AG04450 (cell line): ENCODE measurements at regions of chr10 and their contacts with region 1.

Region 1: GRCh38 chr10:101012525-101013364 is 13.1 kb downstream of the LZTS2 start:
- DNase-seq: peak; percentile 79
- H3K4me3 ChIP-seq: no peak overlapping the region
- H3K27ac ChIP-seq: peak overlapping the region; percentile 75
- H3K27me3 ChIP-seq: no peaks in the 10 kb centered on the region
- CTCF ChIP-seq: peak; percentile 79

Region 2: DNA sequence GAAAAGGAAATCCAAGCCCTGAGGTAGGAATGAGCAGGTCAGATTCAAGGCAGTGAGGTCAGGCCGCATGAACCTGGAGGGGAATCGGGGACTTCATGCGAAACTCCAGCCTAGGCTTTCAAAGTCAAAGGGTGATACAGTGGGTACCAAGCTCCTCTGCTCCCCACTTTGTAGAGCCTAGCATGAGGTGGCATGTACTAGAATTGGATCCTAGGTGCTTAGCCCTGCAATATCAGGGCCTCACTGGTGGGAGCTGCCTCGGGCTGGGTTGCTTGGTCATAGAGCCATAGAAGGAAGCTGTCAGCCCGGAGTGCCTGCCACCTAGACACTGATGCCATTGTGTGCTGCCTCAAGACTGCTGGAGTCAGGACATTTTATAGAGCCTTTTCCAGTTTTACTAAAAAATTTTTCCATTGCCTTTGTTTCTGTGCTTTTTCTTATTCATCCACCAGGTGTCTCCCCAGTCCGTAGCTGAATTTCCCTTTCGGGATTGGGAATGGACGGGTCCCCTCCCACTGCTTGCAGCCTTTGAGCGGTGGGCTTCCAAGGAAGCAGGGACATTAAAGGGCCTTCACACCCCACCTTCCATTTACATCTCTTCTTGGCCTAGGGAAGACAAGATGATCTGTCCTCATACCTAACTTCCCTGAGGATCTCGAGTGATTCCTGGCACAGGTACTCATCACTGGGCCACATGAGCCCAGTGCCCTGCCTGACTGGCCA is 18.6 kb before region 1 on chr10:
- CTCF ChIA-PET with region 1: interaction called, 271 read pairs
- POLR2A ChIA-PET with region 1: interaction called, 20 read pairs
- DNase-seq: no peak
- H3K4me3 ChIP-seq: no peak overlapping the region
- H3K27ac ChIP-seq: no peak overlapping the region
- H3K27me3 ChIP-seq: no peaks in the 10 kb centered on the region
- CTCF ChIP-seq: peak; percentile 75

Region 3: GRCh38 chr10:100998991-100999741 is 13.6 kb before region 1 on chr10:
- CTCF ChIA-PET with region 1: interaction called, 271 read pairs
- POLR2A ChIA-PET with region 1: interaction called, 20 read pairs
- DNase-seq: no peak
- H3K4me3 ChIP-seq: peak overlapping the region; percentile 90
- H3K27ac ChIP-seq: peak overlapping the region; percentile 95
- H3K27me3 ChIP-seq: no peaks in the 10 kb centered on the region
- CTCF ChIP-seq: peak; percentile 76

Region 4: DNA sequence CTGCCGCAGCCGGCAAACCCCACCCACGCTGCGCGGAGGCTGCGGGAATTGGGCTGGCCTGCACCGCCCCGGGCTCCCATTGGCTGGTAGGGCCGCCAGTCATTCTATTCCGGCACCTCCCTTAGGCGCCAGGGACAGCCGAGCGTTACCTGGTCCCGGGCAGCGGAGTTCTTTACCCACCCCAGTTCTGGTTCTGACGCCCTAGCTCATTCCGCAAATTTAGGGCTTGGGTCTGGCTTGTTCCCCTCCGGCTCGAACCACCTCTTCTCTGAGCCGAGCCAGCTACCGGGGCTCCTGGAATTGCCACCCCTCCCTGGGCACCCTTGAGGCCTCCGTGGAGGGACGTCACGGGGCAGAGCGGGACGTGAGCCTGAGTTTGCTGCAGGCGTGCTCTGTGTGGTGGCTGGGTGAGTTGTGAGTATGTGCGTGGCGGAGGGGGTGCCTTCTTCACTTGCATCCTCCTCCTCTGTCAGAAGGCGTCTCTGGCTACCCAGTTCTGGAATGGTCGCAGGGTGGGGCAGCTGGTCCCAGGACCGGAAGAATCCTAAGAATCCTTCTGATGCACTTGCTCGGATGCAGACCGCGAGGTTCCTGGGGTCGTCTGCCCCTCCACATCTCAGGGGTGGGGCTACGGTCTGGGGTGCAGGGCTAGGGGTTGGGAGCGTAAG is 18.5 kb after region 1 on chr10 and contains the starts of genes PDZD7 and SFXN3:
- CTCF ChIA-PET with region 1: interaction called, 46 read pairs
- POLR2A ChIA-PET with region 1: no interaction called
- DNase-seq: peak; percentile 83
- H3K4me3 ChIP-seq: peak within 1 kb of the TSS; percentile 96
- H3K27ac ChIP-seq: peak within 1 kb of the TSS; percentile 99
- H3K27me3 ChIP-seq: no peaks in the 10 kb centered on the region
- CTCF ChIP-seq: no peak
- polyA plus RNA-seq, gene PDZD7: 0.27 and 0.60 TPM in 2 replicates
- polyA plus RNA-seq, gene SFXN3: 77.8 and 87.0 TPM in 2 replicates

Region 5: DNA sequence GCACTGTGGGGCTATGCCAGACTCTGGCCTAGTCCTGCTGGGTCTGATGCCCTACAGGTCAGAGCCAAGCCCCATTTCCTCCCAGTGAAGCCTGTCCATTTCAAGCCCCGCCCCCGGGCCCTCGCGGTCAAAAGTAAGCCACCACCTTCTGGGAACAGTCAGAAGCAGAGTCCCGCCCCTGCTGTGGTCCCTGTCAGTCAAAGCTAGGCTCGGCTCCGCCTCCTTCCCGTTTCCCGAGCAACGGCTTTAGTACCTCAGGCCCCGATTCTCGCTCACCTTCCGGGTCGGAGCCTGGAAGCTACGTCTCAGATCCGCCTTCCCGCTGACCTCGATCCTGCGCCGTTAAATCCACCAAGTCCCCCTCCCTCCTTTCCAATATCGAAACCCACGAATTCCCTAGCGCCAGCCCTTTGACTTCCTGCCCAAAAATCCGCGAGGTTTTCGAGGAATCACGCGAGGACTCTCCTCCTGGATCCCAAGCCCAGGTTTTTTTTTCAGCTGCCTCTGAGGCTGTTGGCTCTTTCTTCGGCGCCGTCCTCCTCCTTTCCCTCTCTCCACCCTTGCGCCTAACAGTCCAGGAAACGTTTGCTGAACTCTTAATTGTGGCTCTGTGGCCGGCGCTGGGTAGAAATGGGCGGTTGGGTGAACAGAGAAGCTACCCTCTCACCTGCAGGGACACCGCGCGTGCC is 30.1 kb after region 1 on chr10:
- CTCF ChIA-PET with region 1: interaction called, 27 read pairs
- POLR2A ChIA-PET with region 1: interaction called, 4 read pairs
- DNase-seq: peak; percentile 89
- H3K4me3 ChIP-seq: peak overlapping the region; percentile 58
- H3K27ac ChIP-seq: peak overlapping the region; percentile 84
- H3K27me3 ChIP-seq: no peaks in the 10 kb centered on the region
- CTCF ChIP-seq: no peak

Region 6: DNA sequence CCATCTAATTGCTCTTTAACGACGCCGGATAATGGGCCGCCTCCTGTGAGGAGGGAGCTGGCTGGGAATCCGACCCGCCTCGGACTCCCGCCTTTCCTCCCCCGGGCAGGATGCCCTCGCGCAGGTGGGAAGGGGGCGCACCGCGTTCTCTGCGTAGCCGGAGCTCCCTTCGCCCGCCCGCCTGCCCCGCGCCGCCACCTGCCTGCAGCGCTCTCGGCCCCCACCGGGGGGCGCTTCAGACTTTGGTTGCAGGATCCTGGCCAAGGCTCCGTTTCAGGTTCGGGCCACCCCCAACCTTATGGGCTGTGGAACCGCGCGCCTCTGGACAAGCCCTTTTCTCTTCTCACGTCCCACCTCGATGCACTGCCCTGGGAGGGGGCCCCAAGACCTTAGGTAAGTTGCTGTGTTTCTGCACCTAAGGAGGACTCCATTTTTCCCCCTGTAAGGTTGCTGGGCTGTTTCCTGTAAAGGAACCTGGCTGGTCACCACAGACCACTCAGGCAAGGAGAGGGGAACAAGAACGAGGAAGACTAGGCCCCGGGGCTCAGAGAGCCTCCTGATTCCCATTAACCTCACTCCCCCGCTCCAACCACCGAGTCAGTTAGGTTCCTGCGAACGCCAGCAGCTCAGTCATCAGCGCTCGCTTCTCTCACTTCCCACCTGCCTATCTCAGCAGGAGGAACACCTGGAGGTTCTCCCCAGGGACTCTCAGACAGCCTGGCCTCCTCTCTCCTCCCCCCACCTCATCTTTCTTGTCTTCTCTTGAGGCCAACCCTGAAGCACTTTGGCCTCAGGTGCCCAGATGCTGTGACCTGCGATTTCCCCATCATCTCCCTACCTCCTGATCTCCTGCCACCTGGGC is 37.7 kb after region 1 on chr10:
- CTCF ChIA-PET with region 1: interaction called, 15 read pairs
- POLR2A ChIA-PET with region 1: interaction called, 4 read pairs
- DNase-seq: no peak
- H3K4me3 ChIP-seq: peak overlapping the region; percentile 39
- H3K27ac ChIP-seq: peak overlapping the region; percentile 11
- H3K27me3 ChIP-seq: peaks cover 17% of the 10 kb centered on the region
- CTCF ChIP-seq: peak; percentile 85

Region 7: DNA sequence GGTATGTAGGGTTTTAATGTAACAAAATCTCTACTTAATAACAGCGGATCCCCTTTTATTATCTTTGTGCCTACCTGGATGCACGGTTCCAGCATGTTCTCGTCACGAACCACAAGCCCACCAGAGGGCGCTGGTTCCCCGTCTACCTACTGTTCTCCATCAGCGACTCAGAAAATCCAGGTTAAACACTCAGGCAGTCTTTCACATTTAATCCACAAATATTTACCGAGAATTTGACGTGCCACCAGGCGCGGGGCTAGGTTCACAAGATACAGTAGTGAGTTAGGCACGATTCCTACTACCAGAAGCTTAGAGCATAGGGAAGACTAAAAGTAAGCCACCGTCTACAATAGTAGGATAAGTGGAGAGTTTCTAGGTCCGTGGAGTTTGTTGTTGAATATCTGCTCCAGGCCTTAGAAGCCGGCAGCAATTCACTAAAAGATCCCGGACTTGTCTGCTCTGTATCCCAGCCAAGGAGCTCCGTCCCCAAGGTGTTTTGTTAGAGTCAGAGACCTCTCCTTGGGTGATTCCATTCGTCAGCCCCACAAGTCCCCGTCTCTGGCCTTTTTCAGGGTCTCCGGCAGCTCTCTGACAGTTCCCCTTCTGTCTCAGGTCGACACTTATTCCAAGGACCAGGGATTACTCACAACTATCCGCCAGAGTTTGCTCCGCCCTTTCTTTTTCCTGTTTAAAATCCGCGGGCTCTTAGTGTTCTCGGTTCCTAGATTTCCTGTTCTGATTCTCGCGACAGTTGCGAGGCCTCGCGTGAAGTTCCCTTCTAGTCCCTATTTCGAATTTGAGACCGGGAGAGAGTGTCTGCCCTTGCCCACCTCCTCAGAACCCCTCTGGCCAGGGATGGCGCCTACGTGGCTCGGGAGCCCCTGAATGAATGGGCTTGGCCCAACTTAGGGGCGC is 47.5 kb after region 1 on chr10:
- CTCF ChIA-PET with region 1: interaction called, 32 read pairs
- POLR2A ChIA-PET with region 1: no interaction called
- DNase-seq: peak; percentile 85
- H3K4me3 ChIP-seq: peak overlapping the region; percentile 100
- H3K27ac ChIP-seq: peak overlapping the region; percentile 98
- H3K27me3 ChIP-seq: no peaks in the 10 kb centered on the region
- CTCF ChIP-seq: peak; percentile 88